AG04450 (cell line): ENCODE measurements at regions of chr5 and their contacts with region 1.

Region 1: GRCh38 chr5:96614110-96614691 is 48.0 kb upstream of the CAST start:
- DNase-seq: peak; percentile 86
- H3K4me3 ChIP-seq: peak overlapping the region; percentile 45
- H3K27ac ChIP-seq: peak overlapping the region; percentile 81
- H3K27me3 ChIP-seq: no peaks in the 10 kb centered on the region
- CTCF ChIP-seq: peak; percentile 52

Region 2: GRCh38 chr5:96344678-96345577 is 269.3 kb before region 1 on chr5:
- CTCF ChIA-PET with region 1: interaction called, 34 read pairs
- POLR2A ChIA-PET with region 1: no interaction called
- DNase-seq: peak; percentile 66
- H3K4me3 ChIP-seq: no peak overlapping the region
- H3K27ac ChIP-seq: no peak overlapping the region
- H3K27me3 ChIP-seq: no peaks in the 10 kb centered on the region
- CTCF ChIP-seq: peak; percentile 61

Region 3: GRCh38 chr5:96662725-96663513 is 48.7 kb after region 1 on chr5:
- CTCF ChIA-PET with region 1: interaction called, 14 read pairs
- POLR2A ChIA-PET with region 1: interaction called, 13 read pairs
- DNase-seq: peak; percentile 47
- H3K4me3 ChIP-seq: peak overlapping the region; percentile 86
- H3K27ac ChIP-seq: peak overlapping the region; percentile 85
- H3K27me3 ChIP-seq: no peaks in the 10 kb centered on the region
- CTCF ChIP-seq: peak; percentile 11; the same call in 1 of the 2 replicates

Region 4: DNA sequence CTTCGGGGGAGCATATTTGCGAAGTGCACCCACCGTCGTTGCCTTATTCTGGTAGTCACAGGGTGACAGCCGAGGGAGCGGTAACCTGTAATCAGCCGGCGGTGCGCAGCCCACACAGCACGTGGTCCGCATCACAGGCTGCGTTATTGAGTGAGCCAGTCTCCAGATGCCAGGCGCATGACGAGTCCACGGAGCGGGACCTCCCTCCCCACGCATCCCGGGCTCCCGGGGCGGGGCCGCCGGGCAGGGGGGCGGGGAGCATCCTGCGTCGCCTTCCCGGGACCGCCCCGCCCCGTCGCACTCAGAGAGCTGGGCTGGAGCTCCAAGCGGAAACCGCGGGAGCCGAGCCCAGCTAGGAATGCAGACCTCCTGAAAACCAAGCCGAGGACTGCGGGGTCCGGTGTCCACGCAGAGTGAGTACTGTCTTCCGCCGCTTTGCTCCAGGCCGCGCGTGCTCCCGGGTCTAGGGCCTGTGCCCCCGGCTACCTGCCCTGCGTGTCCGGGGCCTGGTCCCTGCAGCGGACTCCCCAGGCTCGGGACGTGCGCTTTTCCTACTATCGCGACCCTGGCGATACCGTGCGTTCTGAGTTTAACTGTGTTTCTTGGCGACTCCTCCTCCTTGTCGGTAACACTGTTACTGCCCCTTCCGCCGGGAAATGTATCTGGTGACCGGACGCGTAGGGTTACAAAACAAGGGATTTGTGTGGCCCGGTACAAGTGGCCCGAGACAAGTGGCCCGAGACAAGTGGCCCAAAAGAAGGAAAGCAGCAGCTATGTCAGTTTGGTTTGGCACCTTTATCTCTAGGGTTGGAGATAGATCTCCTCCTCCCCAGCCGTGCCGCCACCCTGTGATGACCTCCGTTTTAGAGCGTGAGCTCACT is 88.5 kb after region 1 on chr5:
- CTCF ChIA-PET with region 1: no interaction called
- POLR2A ChIA-PET with region 1: interaction called, 11 read pairs
- DNase-seq: peak; percentile 87
- H3K4me3 ChIP-seq: peak overlapping the region; percentile 74
- H3K27ac ChIP-seq: peak overlapping the region; percentile 94
- H3K27me3 ChIP-seq: no peaks in the 10 kb centered on the region
- CTCF ChIP-seq: no peak

Region 5: DNA sequence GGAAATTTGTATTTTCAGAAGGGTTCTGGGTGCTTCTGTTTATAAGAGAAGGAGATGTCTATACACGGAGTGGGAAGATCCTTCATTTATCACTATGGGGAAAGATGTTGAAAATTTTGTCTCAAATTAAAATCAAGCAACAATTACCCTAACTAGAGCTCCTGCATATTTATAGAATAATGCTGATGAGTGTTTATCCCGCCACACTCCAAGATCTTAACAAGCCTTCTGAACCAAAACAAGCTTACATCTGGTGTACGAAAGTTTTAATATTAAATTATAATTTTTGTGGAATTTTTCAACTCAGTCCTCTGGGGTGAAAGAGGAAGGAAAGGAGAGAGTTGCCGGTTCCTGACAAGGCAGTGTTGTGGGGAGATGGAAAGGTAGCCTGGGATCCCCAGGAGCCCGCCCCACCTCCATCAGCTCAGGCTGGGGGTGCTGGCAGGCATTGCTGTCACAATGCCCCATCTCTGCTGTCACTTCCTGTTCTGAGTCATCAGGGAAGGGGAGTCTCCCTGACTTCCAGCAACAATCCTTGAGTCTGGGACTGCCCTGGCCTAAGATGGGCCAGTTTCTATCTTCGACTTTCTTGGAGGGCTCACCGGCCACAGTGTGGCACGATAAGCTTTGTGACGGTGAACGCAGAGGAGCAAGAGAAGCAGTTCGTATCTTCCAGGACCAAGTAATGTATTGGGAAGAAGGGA is 129.0 kb after region 1 on chr5:
- CTCF ChIA-PET with region 1: interaction called, 10 read pairs
- POLR2A ChIA-PET with region 1: no interaction called
- DNase-seq: no peak
- H3K4me3 ChIP-seq: no peak overlapping the region
- H3K27ac ChIP-seq: no peak overlapping the region
- H3K27me3 ChIP-seq: no peaks in the 10 kb centered on the region
- CTCF ChIP-seq: no peak

Region 6: DNA sequence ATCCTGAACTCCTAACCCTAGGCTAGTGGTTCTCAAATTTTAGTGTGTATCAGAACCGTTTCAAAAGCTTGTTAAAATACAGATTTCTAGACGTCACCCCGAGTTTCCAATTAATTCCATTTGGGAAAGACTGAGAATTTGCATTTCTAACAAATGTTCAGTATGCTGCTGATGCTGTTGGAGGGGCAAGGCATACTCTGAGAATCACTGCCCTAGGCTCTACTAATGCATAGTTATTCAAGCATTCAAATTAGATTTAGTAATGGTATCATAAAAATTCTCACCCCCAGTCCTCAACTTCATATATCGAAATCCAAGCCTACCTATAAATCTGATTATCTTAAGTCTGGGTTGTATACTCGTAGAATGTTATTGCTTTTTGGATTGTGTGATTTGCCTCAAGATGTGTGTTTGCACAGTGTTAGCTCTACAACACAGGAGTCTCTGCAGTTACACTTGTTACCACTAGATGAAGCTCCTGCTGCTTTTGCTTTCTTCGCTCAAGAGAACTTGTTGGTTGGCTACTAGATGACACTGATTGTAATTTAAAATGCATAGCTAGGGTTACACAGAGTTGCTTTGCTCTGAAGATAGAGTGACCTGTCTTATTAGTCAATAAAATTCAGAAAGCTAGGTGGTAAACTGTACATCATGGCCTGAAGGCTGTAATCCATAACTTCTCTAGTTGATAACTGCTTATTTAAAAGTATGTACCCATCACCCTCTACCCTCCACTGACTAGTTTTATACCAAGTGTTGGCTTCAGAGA is 254.6 kb after region 1 on chr5:
- CTCF ChIA-PET with region 1: interaction called, 10 read pairs
- POLR2A ChIA-PET with region 1: no interaction called
- DNase-seq: peak; percentile 61
- H3K4me3 ChIP-seq: no peak overlapping the region
- H3K27ac ChIP-seq: no peak overlapping the region
- H3K27me3 ChIP-seq: no peaks in the 10 kb centered on the region
- CTCF ChIP-seq: peak; percentile 100